ENCODE measurements at regions of chr1 and their contacts with region 1.

Region 1: GRCh38 chr1:223087291-223088255 is 55.5 kb downstream of the TLR5 start:
- DNase-seq: no peak
- H3K4me3 Mint-ChIP-seq: no peak overlapping the region
- H3K27ac Mint-ChIP-seq: no peak overlapping the region
- H3K4me1 Mint-ChIP-seq: no peaks in the 10 kb centered on the region
- H3K27me3 Mint-ChIP-seq: peaks cover 52% of the 10 kb centered on the region
- CTCF ChIP-seq: no peak

Region 2: GRCh38 chr1:222739465-222739864 is 348.1 kb before region 1 on chr1:
- CTCF ChIA-PET with region 1: interaction called, 86 read pairs
- POLR2A ChIA-PET with region 1: interaction called, 4 read pairs
- intact Hi-C with region 1: loop called (anchors 1 kb)
- DNase-seq: no peak
- H3K4me3 Mint-ChIP-seq: no peak overlapping the region
- H3K27ac Mint-ChIP-seq: no peak overlapping the region
- H3K4me1 Mint-ChIP-seq: no peaks in the 10 kb centered on the region
- H3K27me3 Mint-ChIP-seq: no peaks in the 10 kb centered on the region
- CTCF ChIP-seq: no peak

Region 3: DNA sequence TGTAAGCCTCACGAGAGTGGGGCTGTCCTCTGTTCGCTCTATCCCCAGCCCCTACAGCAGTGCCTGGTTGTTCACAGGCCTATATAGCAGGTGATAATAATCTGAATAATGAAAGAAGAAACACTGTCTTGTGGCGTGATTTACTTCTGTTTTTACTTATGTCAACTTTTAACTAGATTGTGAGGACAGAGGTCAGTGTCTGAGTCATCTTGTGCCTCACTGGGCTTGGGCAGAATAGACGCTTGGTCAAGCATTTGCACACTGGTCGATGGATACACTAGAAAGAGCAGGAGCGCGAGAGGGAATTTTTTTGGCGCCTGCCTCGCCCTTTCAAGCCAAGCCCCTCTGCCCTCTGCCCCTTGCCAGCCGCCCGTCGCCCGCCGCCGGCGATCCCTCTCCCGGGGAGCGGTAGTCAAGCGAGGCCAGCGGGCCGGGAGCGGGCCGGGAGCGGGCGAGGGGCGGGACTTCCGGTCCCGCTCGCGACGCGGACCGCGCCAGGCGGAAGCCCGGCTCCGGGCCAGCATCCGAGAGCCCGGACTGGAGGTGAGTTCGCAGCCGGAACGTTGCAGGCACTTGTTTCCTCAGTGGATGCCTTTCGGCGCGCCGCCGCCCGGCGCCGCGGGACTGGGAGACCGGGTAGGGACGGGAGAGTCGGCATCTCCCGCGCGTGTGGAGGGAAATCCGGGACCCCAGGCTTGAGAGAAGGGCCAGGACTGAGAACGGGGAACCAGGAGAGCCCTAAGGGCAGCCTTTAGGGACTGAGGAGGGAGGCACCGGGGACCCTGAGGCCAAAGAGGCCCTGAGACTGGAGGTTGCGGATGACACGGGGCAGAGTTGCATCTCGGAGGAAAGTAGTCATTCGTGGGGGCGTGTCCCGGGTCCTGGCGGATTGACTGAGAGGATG is 272.8 kb before region 1 on chr1 and contains the start of gene DISP1:
- CTCF ChIA-PET with region 1: interaction called, 20 read pairs
- POLR2A ChIA-PET with region 1: interaction called, 3 read pairs
- intact Hi-C with region 1: no loop called
- DNase-seq: peak; percentile 87
- H3K4me3 Mint-ChIP-seq: peak within 1 kb of the TSS; percentile 96
- H3K27ac Mint-ChIP-seq: peak within 1 kb of the TSS; percentile 96
- H3K4me1 Mint-ChIP-seq: peaks cover 28% of the 10 kb centered on the region
- H3K27me3 Mint-ChIP-seq: no peaks in the 10 kb centered on the region
- CTCF ChIP-seq: no peak
- total RNA-seq, gene DISP1: 6.7 and 7.6 TPM in 2 replicates

Region 4: GRCh38 chr1:222940095-222940494 is 147.5 kb before region 1 on chr1:
- CTCF ChIA-PET with region 1: no interaction called
- POLR2A ChIA-PET with region 1: no interaction called
- intact Hi-C with region 1: no loop called
- DNase-seq: no peak
- H3K4me3 Mint-ChIP-seq: no peak overlapping the region
- H3K27ac Mint-ChIP-seq: no peak overlapping the region
- H3K4me1 Mint-ChIP-seq: no peaks in the 10 kb centered on the region
- H3K27me3 Mint-ChIP-seq: no peaks in the 10 kb centered on the region
- CTCF ChIP-seq: no peak

Region 5: GRCh38 chr1:222994506-222995235 is 92.9 kb before region 1 on chr1:
- CTCF ChIA-PET with region 1: interaction called, 10 read pairs
- POLR2A ChIA-PET with region 1: no interaction called
- intact Hi-C with region 1: no loop called
- DNase-seq: peak; percentile 88
- H3K4me3 Mint-ChIP-seq: peak overlapping the region; percentile 32
- H3K27ac Mint-ChIP-seq: peak overlapping the region; percentile 65
- H3K4me1 Mint-ChIP-seq: peaks cover 29% of the 10 kb centered on the region
- H3K27me3 Mint-ChIP-seq: peaks cover 17% of the 10 kb centered on the region
- CTCF ChIP-seq: no peak

Region 6: DNA sequence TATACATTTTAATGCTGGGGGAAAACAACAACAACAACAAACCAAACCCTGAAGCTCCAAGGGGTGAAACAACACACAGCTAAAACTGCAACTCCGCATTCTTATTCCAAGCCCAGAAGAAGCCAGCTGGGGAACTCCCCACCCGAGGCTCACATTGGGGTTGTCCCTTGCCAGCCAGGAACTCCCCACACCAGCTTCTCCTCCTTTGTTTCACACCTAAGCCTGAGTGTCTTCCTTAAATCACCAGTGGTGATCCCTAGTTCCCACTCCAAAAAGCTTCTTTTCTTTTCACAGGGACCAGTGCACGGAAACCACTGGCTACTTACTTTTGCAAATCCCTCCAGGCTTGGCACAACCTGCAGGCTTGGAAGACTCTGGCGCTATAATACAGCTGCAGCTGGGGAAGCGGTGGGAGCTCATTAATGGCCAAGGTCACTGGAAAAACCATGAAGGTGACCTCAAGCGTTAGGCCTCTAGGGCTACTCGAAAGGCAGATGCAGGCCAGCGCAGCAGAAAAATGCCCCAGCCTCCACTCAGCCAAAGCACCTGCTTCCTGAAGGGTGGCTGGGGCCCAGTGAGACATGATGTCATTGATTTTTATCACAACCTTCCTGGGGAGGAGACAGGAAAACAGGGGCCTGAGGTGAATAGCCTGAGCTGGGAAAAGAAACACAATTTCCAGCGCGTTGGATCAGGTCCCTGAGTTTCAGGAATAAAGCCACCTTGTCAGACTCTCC is 15.4 kb after region 1 on chr1:
- CTCF ChIA-PET with region 1: interaction called, 129 read pairs
- POLR2A ChIA-PET with region 1: interaction called, 7 read pairs
- intact Hi-C with region 1: no loop called
- DNase-seq: no peak
- H3K4me3 Mint-ChIP-seq: no peak overlapping the region
- H3K27ac Mint-ChIP-seq: no peak overlapping the region
- H3K4me1 Mint-ChIP-seq: no peaks in the 10 kb centered on the region
- H3K27me3 Mint-ChIP-seq: no peaks in the 10 kb centered on the region
- CTCF ChIP-seq: no peak

Region 7: DNA sequence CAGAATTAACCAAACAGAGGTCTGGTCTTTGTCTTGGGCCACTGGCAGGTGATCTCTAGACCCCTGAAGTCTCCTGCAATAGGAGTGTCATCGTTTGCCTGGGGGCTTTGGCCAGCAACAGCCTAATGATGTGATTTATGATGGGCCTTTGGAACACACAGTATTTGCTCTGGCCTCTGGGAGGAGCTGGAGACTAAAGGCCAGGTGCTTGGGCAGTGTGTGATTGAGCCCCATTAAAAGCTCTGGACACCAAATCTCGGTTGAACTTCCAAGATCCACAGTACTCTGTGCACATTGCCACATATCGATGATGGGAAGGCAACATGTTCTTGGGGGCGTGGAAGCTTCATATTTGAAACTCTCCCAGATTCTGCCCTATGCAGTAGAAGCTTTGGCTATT is 87.5 kb after region 1 on chr1:
- CTCF ChIA-PET with region 1: no interaction called
- POLR2A ChIA-PET with region 1: no interaction called
- intact Hi-C with region 1: no loop called
- DNase-seq: peak; percentile 80
- H3K4me3 Mint-ChIP-seq: no peak overlapping the region
- H3K27ac Mint-ChIP-seq: no peak overlapping the region
- H3K4me1 Mint-ChIP-seq: peaks cover 10% of the 10 kb centered on the region
- H3K27me3 Mint-ChIP-seq: no peaks in the 10 kb centered on the region
- CTCF ChIP-seq: peak; percentile 71

Region 8: DNA sequence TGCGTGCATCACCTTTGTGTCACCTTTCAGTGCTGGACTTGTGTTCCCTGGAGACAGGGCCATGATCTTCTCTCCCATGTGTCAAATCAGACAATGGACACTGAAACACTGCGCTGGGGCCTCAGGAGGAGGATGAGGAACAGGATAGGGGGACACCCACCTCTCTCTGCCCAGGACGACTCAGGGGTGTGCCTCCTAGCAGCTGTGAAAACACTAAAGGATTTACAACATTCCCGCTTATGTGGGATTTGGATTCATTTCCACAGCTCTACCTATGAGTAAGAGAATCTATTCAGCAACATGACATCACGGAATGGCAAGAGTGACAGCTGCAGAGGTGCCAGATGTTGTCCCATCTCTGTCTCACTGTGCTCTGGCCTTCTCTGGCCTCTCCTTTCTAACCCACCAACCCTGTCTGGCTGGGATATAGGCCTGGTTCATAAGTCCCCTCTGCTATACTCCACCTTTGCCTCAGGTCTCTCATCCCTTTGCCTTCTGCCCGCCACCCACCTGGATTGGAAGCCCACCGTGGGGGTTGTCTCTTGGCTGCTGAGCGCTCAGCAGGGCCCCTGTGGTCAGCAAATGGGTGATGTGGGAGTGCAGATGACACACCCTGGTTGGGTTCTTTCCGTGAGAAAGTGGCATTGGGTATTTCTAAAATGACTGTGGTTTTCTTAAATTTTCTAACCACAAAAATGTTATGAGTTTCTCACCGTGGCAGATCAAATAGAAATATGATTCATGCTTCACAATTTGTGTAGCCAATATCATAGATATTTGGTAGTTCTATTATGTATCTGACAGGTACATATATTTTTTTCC is 102.5 kb after region 1 on chr1:
- CTCF ChIA-PET with region 1: no interaction called
- POLR2A ChIA-PET with region 1: no interaction called
- intact Hi-C with region 1: no loop called
- DNase-seq: peak; percentile 92
- H3K4me3 Mint-ChIP-seq: peak overlapping the region; percentile 45
- H3K27ac Mint-ChIP-seq: peak overlapping the region; percentile 93
- H3K4me1 Mint-ChIP-seq: peaks cover 16% of the 10 kb centered on the region
- H3K27me3 Mint-ChIP-seq: peaks cover 17% of the 10 kb centered on the region
- CTCF ChIP-seq: no peak

Region 9: GRCh38 chr1:223216531-223217205 is 129.1 kb after region 1 on chr1:
- CTCF ChIA-PET with region 1: no interaction called
- POLR2A ChIA-PET with region 1: no interaction called
- intact Hi-C with region 1: no loop called
- DNase-seq: no peak
- H3K4me3 Mint-ChIP-seq: no peak overlapping the region
- H3K27ac Mint-ChIP-seq: no peak overlapping the region
- H3K4me1 Mint-ChIP-seq: no peaks in the 10 kb centered on the region
- H3K27me3 Mint-ChIP-seq: no peaks in the 10 kb centered on the region
- CTCF ChIP-seq: no peak

Measured in MCF 10A (cell line).